ENCODE measurements at regions of chr11 and their contacts with region 1.

Region 1: GRCh38 chr11:66311965-66312548 is 4.8 kb downstream of the CD248 start:
- DNase-seq: peak; percentile 92
- H3K4me3 Mint-ChIP-seq: peak overlapping the region; percentile 93
- H3K27ac Mint-ChIP-seq: peak overlapping the region; percentile 96
- H3K4me1 Mint-ChIP-seq: peaks cover 8% of the 10 kb centered on the region
- H3K27me3 Mint-ChIP-seq: no peaks in the 10 kb centered on the region

Region 2: DNA sequence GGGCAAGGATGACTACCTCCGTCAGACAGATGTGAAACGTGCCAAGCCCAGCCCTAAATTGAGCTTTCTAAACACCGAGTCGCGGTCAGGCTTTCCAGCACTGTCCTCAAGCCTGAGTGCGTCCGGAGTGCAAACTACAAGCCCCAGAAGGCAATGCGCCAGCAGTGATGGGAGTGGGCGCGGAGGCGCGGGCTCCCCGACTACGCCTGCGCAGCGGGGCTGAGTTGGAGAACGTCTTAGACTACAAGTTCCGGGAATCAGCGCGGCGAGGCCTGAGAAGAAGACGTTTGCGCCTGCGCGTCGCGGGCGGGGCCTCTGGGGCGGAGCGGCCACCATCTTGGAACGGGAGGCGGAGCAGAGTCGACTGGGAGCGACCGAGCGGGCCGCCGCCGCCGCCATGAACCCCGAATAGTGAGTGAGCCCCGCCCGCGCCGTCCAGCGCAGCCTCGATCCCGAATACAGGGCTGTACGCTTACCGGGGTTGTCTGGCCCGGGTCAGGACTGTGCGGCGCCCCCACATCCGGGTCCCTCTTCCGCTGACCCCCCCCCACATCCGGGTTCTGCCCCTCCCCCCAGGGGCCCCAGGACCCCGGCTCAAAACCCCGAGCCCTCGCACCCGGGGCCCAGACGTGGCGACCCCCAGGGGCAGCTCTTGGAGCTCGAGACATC is 43.6 kb before region 1 on chr11 and contains the start of gene RAB1B:
- intact Hi-C with region 1: loop called (anchors 2 kb)
- DNase-seq: peak; percentile 100
- H3K4me3 Mint-ChIP-seq: peak within 1 kb of the TSS; percentile 91
- H3K27ac Mint-ChIP-seq: peak within 1 kb of the TSS; percentile 84
- H3K4me1 Mint-ChIP-seq: peaks cover 24% of the 10 kb centered on the region
- H3K27me3 Mint-ChIP-seq: no peaks in the 10 kb centered on the region
- total RNA-seq, gene RAB1B: 134 and 139 TPM in 2 replicates

Region 3: GRCh38 chr11:66288671-66289547 is 23.1 kb before region 1 on chr11 and contains the start of gene YIF1A:
- intact Hi-C with region 1: loop called (anchors 1 kb)
- DNase-seq: peak; percentile 99
- H3K4me3 Mint-ChIP-seq: peak within 1 kb of the TSS; percentile 94
- H3K27ac Mint-ChIP-seq: peak within 1 kb of the TSS; percentile 89
- H3K4me1 Mint-ChIP-seq: peaks cover 14% of the 10 kb centered on the region
- H3K27me3 Mint-ChIP-seq: peaks cover 28% of the 10 kb centered on the region
- total RNA-seq, gene YIF1A: 78.9 and 85.2 TPM in 2 replicates

Region 4: GRCh38 chr11:66328307-66329144 is 16.5 kb after region 1 on chr11:
- intact Hi-C with region 1: loop called (anchors 1 kb)
- DNase-seq: peak; percentile 70
- H3K4me3 Mint-ChIP-seq: no peak overlapping the region
- H3K27ac Mint-ChIP-seq: peak overlapping the region; percentile 73
- H3K4me1 Mint-ChIP-seq: peaks cover 23% of the 10 kb centered on the region
- H3K27me3 Mint-ChIP-seq: no peaks in the 10 kb centered on the region

Region 5: DNA sequence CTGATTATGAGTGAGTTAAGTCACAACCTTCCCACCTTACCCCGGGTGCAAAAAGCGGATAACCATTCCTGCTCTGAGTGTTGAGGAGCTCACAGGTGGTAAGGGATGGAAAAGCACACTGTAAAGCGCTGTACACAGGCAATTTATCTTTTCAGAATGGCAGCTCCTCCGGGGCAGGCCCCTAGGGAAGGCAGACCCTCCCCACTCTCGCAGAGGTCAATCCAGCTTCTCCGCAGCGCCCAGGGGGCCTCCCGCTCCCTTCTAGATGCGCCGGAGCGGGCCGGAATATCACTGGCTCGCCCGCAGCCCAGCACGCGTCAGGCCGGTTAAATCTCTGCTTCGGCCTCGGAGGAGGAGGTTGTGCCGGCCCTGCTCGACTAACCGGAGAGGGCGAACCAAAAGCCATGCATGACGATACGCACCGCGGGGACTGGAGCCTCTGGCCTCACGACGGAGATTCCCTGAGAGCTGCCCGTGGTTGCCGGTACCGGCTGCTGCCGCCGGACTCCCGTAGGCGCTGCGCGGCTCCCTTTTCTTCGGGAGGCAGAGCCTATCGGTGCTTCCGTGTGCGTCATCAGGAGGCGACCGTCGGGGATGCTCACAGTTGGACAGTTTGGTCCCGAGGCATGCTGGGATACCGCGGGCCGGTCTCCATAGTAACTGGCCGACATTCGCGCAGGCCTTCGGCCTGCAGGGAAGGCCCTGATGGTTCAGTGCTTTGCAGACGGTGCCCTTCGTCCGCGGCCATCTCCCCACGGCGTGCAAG is 32.7 kb after region 1 on chr11 and contains the start of gene BRMS1:
- intact Hi-C with region 1: loop called (anchors 2 kb)
- DNase-seq: peak; percentile 93
- H3K4me3 Mint-ChIP-seq: peak within 1 kb of the TSS; percentile 93
- H3K27ac Mint-ChIP-seq: peak within 1 kb of the TSS; percentile 91
- H3K4me1 Mint-ChIP-seq: peaks cover 32% of the 10 kb centered on the region
- H3K27me3 Mint-ChIP-seq: no peaks in the 10 kb centered on the region
- total RNA-seq, gene BRMS1: 45.1 and 46.0 TPM in 2 replicates

Region 6: GRCh38 chr11:66371627-66372415 is 59.8 kb after region 1 on chr11 and contains the start of gene SLC29A2:
- intact Hi-C with region 1: no loop called
- DNase-seq: peak; percentile 76
- H3K4me3 Mint-ChIP-seq: peak within 1 kb of the TSS; percentile 88
- H3K27ac Mint-ChIP-seq: peak within 1 kb of the TSS; percentile 87
- H3K4me1 Mint-ChIP-seq: peaks cover 15% of the 10 kb centered on the region
- H3K27me3 Mint-ChIP-seq: no peaks in the 10 kb centered on the region
- total RNA-seq, gene SLC29A2: 18.7 and 19.1 TPM in 2 replicates

Region 7: GRCh38 chr11:66386171-66387069 is 74.4 kb after region 1 on chr11:
- intact Hi-C with region 1: loop called (anchors 2 kb)
- DNase-seq: peak; percentile 71
- H3K4me3 Mint-ChIP-seq: peak overlapping the region; percentile 53
- H3K27ac Mint-ChIP-seq: no peak overlapping the region
- H3K4me1 Mint-ChIP-seq: peaks cover 8% of the 10 kb centered on the region
- H3K27me3 Mint-ChIP-seq: peaks cover 7% of the 10 kb centered on the region

Measured in activated T-helper 2 cell treated with anti-CD3 and anti-CD28 coated beads, Interferon-gamma antibody, Interleukin-2, Interleukin-4, amounts not matched to agents 10 μg/mL and 5 μg/mL and 100 μg/mL, durations not matched to agents 14 hours and 24 hours and 36 hours (primary cell).